Panc1 (cell line): ENCODE measurements at regions of chr22 and their contacts with region 1.

Region 1: DNA sequence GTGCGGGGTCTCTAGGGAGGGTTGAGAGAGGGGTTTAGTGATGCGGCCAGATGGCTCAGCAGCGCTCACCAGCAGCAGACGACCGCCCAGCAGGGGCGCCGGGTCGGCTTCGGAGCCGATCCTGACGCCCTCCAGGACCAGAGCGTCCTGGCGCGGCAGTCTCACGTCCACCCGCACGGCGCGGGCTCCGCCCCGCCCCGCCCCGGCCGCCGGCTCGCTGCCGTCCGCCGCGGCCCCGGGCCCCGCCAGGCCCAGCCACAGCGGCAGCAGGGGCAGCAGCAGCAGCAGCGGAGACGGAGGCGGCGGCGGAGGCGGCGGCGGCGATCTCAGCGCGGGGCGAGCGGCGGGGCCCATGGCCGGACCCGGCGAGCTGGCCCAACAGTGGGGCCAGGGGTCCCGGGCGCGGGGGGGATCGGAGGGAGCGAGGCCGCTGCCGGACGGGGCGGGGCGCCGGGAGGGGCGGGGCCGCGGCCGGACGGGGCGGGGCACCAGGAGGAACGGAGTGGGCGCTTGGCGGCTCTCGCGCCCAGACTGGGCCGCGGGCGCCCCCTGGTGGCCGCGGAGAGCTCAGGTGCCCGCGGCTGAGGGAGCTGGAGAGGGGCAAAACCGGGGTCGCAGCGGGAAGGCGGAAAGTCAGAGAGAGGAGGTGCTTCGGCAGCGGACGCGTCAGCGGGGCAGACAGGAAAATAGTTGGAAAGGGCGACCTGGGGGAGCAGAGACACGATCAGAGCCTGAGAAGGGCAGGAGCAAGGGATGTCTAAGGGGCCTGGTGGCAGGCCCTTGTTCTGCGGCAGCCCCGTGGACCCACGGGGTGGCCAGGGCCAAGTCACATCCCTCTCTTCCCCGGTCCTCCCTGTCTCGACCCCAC is at the start of gene RNF215:
- DNase-seq: no peak
- ATAC-seq: peak; percentile 95
- H3K4me3 ChIP-seq: peak within 1 kb of the TSS; percentile 49 to 60
- H3K27ac ChIP-seq: peak within 1 kb of the TSS; percentile 79
- H3K4me1 ChIP-seq: peaks cover 6% of the 10 kb centered on the region; the same call in 1 of the 2 replicates
- H3K27me3 ChIP-seq: no peaks in the 10 kb centered on the region
- CTCF ChIP-seq: peak; percentile 95
- total RNA-seq, gene RNF215: 35.8 TPM

Region 2: DNA sequence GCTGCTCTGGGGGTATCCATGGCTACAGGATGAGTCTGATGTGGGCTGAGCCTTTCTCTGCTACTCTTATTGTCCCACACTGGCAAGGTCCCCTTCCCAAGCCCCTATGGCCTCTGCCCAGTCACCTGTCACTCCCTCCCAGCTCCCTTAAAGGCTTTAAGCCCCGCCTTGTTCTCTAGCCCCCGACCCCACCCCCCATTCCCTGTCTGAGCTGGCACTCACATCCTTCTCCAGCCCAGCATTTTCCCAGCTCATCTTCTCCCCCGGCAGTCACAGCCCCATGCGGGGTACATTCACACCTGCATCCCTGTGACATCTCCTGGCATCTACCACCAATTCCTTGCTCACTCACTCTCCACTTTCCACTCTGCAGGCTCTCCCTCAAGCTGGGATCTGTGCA is 42.7 kb after region 1 on chr22:
- CTCF ChIA-PET with region 1: interaction called, 10 read pairs
- POLR2A ChIA-PET with region 1: no interaction called
- in situ Hi-C with region 1: no loop called
- intact Hi-C with region 1: no loop called
- DNase-seq: no peak
- ATAC-seq: no peak
- H3K4me3 ChIP-seq: no peak overlapping the region
- H3K27ac ChIP-seq: no peak overlapping the region
- H3K4me1 ChIP-seq: peaks cover 3% of the 10 kb centered on the region
- H3K27me3 ChIP-seq: no peaks in the 10 kb centered on the region
- CTCF ChIP-seq: no peak

Region 3: GRCh38 chr22:30459181-30460052 is 72.2 kb after region 1 on chr22:
- CTCF ChIA-PET with region 1: no interaction called
- POLR2A ChIA-PET with region 1: no interaction called
- in situ Hi-C with region 1: no loop called
- intact Hi-C with region 1: no loop called
- DNase-seq: no peak
- ATAC-seq: no peak; the same call in 1 of the 2 replicates
- H3K4me3 ChIP-seq: no peak overlapping the region
- H3K27ac ChIP-seq: no peak overlapping the region
- H3K4me1 ChIP-seq: no peaks in the 10 kb centered on the region
- H3K27me3 ChIP-seq: no peaks in the 10 kb centered on the region
- CTCF ChIP-seq: no peak